ENCODE measurements at regions of chr22 and their contacts with region 1.

Region 1: DNA sequence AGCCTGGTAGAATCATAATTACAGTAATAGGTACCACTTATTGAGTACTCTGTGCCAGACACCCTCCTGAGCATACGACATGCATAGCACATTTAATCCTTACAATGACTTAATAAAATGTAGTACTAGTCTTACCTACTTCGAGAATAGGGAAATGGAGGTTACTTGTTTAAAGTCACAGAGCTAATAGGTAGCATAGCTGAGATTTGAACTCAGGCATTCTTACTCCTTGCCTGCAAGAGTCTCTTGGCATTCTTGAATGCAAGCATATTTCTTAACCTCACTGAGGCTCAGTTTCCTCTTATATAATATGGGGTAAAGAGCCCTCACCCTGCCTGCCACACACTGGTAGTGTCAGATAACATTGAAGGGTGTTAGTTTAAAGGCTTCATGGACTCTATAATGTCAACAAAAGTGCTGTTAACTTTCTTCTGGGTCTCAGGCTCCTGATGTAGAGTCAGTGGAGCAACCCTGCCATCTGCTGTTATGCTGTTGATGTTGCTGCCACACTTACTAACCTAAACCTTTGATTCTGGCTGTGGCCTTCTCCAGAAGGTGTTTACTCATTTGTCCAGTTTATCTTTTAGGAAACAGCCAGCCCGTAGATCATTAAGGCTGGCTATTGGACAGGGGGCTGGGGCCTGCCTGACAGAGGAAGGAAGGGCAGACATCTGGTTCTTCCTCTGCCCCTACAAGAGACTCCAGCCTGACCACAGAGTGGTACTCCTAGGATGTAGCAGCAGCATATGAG is 18.9 kb downstream of the LIMK2 start:
- DNase-seq: peak in 1 of 2 donors; percentile 59
- ATAC-seq: peak; percentile 76 to 85 (median 80)
- H3K4me3 ChIP-seq: peak overlapping the region; percentile 2
- H3K27ac ChIP-seq: peak overlapping the region; percentile 87
- H3K4me1 ChIP-seq: peaks cover 46% of the 10 kb centered on the region
- H3K27me3 ChIP-seq: no peaks in the 10 kb centered on the region
- CTCF ChIP-seq: peak; percentile 76

Region 2: DNA sequence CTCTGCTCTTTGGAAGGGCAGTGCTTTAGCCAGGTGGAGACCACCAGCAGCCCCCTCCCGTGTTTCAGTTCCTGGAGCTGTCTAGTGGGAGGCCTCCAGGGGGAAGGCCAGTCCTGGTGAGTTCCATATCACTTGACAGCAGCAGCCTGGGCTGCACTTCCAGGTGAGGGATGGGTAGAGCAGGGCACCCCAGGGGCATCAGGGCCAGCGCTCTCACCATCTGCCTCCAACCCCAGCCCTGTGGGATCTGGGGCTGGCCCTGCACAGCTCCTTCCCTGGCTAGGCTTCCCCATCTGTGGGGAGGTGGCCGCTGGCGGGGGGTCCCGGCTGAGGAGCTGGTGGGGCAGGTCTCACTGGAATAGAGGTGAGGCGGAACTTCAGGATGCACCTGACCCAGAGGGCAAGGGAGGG is 323.0 kb before region 1 on chr22:
- intact Hi-C with region 1: no loop called
- DNase-seq: no peak
- ATAC-seq: no peak
- H3K4me3 ChIP-seq: no peak overlapping the region
- H3K27ac ChIP-seq: no peak overlapping the region
- H3K4me1 ChIP-seq: no peaks in the 10 kb centered on the region
- H3K27me3 ChIP-seq: no peaks in the 10 kb centered on the region
- CTCF ChIP-seq: no peak

Region 3: GRCh38 chr22:30947816-30948454 is 283.1 kb before region 1 on chr22:
- intact Hi-C with region 1: loop called in 1 of 2 experiments (anchors 10 kb)
- DNase-seq: no peak
- ATAC-seq: peak; percentile 53 to 73 (median 64)
- H3K4me3 ChIP-seq: no peak overlapping the region
- H3K27ac ChIP-seq: no peak overlapping the region
- H3K4me1 ChIP-seq: peaks cover 8% of the 10 kb centered on the region
- H3K27me3 ChIP-seq: no peaks in the 10 kb centered on the region
- CTCF ChIP-seq: peak; percentile 59

Region 4: GRCh38 chr22:31080848-31081649 is 150.0 kb before region 1 on chr22 and contains the start of gene SMTN:
- intact Hi-C with region 1: loop called in 1 of 2 experiments (anchors 10 kb)
- DNase-seq: peak; percentile 92 to 95
- ATAC-seq: peak; percentile 80 to 85 (median 82)
- H3K4me3 ChIP-seq: peak within 1 kb of the TSS; percentile 89
- H3K27ac ChIP-seq: peak within 1 kb of the TSS; percentile 94
- H3K4me1 ChIP-seq: peaks cover 27% of the 10 kb centered on the region
- H3K27me3 ChIP-seq: no peaks in the 10 kb centered on the region
- CTCF ChIP-seq: no peak
- total RNA-seq, gene SMTN: 33.6 to 79.3 (median 66.5) TPM

Region 5: DNA sequence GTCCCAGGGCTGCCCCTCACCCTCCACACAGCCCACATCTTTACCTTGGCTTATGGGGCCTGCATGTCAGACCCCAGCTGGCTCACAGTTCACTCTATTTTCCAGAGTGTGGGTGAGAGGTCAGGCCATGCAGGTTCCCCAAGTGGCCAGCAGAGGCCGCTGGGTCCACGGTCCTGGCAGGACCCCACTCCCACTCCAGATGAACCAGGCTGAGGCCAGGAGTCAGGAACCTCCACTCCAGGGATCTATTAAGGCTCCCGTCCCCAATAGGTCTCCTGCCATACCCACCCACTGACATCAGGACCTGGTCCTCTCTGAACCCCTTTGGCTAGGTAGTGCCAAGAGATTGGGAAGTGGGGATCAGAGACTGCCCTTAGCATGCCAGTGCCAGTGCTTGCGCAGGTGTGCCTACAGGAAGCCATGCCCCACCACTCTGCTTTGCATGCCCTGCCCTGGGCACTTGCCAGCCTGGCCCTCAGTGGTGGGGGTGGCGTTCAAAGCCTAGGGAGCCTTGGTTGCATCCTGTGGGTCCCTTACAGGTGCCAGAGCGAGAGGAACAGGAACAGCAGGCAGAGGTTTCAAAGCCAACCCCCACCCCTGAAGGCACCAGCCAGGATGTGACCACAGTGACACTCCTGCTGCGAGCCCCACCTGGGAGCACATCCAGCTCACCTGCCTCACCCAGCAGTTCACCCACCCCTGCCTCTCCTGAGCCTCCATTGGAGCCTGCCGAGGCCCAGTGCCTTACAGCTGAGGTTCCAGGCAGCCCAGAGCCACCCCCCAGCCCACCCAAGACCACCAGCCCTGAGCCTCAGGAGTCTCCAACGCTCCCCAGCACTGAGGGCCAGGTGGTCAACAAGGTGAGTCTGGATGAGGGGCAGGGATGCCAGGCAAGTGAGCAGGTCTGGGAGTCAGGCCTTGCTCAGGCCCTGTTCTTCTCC is 141.6 kb before region 1 on chr22:
- intact Hi-C with region 1: loop called (anchors 5 to 10 kb)
- DNase-seq: peak; percentile 59 to 84
- ATAC-seq: peak; percentile 39 to 57 (median 48)
- H3K4me3 ChIP-seq: no peak overlapping the region
- H3K27ac ChIP-seq: peak overlapping the region; percentile 46
- H3K4me1 ChIP-seq: peaks cover 12% of the 10 kb centered on the region
- H3K27me3 ChIP-seq: no peaks in the 10 kb centered on the region
- CTCF ChIP-seq: peak; percentile 89

Region 6: DNA sequence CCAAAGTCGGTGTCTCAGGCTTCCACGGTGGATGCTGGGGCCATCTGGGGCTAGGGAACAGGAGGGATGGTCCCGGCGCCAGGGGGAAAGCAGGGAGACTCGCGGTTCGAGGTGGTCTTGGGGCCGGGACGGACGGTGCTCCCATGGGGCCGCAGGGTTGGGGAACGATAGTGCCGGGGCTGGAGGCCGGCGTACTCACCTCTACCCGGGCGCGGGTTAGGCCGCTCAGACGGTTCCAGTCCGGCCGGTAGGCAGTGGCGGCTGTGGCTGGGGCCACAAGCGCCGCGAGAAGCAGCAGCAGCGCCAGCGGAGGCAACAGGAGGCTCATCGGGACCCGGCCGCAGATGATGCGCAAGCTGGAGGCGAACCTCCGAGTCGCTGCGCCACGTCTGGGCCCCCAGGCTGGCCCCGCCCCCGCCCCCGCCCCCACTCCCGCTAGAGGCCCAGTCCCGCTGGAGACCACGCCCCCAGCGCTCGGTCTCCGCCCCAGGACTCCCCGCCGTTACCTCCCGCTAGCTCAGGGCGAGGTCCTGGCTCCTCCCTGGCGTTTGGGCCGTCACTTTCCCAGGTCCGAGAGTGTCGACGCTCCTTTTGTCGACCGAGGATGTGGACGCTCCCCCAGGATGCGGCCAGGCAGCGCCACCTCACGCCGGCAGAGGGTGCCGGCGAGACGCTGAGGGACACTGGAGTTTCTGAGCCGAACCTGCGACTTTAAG is 123.7 kb before region 1 on chr22 and contains the start of gene SELENOM:
- intact Hi-C with region 1: loop called (anchors 5 kb)
- DNase-seq: peak; percentile 97 to 99
- ATAC-seq: peak; percentile 91 to 95 (median 92)
- H3K4me3 ChIP-seq: peak within 1 kb of the TSS; percentile 76
- H3K27ac ChIP-seq: peak within 1 kb of the TSS; percentile 89
- H3K4me1 ChIP-seq: peaks cover 17% of the 10 kb centered on the region
- H3K27me3 ChIP-seq: no peaks in the 10 kb centered on the region
- CTCF ChIP-seq: peak; percentile 92
- total RNA-seq, gene SELENOM: 45.4 to 68.2 (median 52.3) TPM

Region 7: GRCh38 chr22:31160328-31160978 is 70.6 kb before region 1 on chr22:
- intact Hi-C with region 1: loop called in 1 of 2 experiments (anchors 5 kb)
- DNase-seq: no peak
- ATAC-seq: peak; percentile 43 to 66 (median 56)
- H3K4me3 ChIP-seq: peak overlapping the region; percentile 91
- H3K27ac ChIP-seq: peak overlapping the region; percentile 95
- H3K4me1 ChIP-seq: peaks cover 26% of the 10 kb centered on the region
- H3K27me3 ChIP-seq: no peaks in the 10 kb centered on the region
- CTCF ChIP-seq: no peak

Region 8: DNA sequence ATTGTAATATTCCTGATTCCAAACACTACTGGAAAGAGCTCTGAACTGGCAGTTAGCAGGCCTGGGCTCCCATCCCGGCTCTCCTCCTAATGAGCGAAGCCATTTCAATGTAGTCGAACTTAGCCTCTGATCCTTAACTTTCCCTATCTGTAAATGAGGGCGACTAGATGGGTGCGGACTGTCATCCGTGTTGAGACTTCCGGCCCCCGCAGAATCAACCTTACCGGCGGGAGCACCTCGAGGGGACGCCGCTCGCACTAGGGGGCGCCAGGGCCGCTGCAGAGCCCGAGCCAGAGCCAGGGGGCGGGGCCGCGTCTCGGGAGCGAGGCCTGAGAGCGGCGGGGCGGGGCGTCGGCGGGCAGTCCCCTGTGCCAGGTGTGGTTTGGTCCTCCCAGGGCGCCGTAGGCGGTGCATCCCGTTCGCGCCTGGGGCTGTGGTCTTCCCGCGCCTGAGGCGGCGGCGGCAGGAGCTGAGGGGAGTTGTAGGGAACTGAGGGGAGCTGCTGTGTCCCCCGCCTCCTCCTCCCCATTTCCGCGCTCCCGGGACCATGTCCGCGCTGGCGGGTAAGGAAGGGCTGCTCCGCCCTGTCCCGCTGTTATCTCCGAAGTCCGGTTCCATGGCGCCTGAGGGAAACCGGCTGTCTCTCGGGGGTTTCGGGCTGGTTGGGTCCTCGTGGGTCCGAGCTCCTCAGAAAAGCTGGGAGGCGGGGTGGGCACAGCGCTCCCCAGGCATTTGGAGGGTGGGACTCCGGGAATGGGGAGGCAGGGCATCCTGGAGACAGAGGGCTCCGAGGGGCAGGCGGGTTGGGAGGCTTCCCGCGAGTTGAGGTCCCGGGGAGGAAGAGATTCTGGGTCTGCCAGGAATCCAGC is 18.9 kb before region 1 on chr22 and contains the start of gene LIMK2:
- intact Hi-C with region 1: loop called in 1 of 2 experiments (anchors 2 kb)
- DNase-seq: peak; percentile 96 to 97
- ATAC-seq: peak; percentile 94 to 97 (median 96)
- H3K4me3 ChIP-seq: peak within 1 kb of the TSS; percentile 96
- H3K27ac ChIP-seq: peak within 1 kb of the TSS; percentile 85
- H3K4me1 ChIP-seq: peaks cover 15% of the 10 kb centered on the region
- H3K27me3 ChIP-seq: no peaks in the 10 kb centered on the region
- CTCF ChIP-seq: peak; percentile 79
- total RNA-seq, gene LIMK2: 12.5 to 73.5 (median 41.1) TPM

Measured in psoas muscle (tissue), 8 donors.